ENCODE measurements at regions of chr22 and their contacts with region 1.

Region 1: DNA sequence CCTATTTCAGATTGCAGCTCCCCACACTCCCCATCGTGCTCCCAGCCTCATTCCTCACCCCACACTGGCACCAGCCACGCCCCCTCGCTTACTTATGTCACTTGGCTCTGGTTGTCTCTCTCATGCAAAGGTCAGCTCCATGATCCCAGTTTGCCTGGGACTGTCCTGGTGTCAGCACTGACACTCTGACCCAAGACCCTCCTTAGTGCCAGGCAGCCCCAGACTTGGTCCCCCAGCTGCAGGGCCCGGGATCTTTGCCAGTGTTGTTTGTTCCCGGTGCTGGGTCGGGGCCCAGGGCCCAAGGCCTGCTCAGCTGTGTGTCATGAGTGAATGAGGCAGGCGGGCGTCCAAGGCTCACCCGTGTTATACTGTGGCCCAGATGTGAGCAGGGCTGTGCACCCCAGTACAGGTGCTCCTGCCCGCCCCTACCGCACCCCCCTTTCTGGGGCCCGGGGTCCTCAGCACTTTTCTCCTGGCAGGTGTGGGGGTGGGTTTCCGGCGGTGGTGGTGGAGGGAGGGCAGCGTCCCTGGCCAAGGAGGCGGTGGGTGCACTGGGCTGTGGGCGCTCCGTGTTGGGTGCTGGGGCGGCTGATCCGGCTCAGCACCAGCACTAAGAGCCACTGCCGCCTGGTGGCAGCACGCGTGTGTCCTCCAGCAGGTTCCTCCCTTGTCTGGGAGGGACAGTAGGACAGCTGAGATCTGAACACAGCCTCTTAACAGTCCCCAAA is 19.5 kb downstream of the IL17REL start:
- DNase-seq: peak; percentile 77
- H3K4me3 Mint-ChIP-seq: no peak overlapping the region
- H3K27ac Mint-ChIP-seq: no peak overlapping the region
- H3K4me1 Mint-ChIP-seq: peaks cover 5% of the 10 kb centered on the region
- H3K27me3 Mint-ChIP-seq: peaks cover 37% of the 10 kb centered on the region

Region 2: DNA sequence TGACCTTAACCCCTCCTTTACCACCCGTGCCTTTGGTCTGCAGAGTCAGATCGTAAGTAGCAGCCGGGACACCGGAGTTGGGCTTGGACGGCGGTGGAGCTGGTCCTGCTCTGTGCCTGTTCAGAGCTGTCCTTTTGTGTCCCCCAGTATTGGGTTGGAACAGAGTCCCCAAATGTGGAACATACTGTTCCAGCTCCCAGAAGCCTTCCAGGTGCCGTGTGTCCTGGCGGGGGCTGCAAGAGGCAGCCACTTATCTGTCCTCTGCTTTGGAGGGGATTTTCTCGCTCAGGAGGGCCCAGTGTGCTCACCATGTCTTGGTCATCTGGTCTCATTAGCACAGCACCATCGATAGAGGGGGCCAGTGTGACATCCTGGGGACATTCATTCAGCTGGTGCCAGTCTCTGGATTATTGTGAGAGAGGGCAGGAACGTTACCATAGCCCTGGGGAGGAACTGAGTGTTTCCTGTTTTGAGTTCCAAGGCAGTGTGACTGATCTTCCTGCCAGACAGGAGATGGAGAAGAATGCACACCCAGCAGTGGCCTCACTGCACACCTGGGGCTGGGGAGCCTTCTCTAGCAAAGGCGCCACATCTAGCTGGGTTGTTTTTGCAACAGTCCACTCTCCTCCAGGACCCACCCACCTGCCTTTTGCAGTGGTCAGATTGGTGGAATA is 62.2 kb before region 1 on chr22:
- CTCF ChIA-PET with region 1: interaction called, 24 read pairs
- DNase-seq: peak; percentile 62
- H3K4me3 Mint-ChIP-seq: no peak overlapping the region
- H3K27ac Mint-ChIP-seq: peak overlapping the region; percentile 79
- H3K4me1 Mint-ChIP-seq: peaks cover 58% of the 10 kb centered on the region
- H3K27me3 Mint-ChIP-seq: no peaks in the 10 kb centered on the region